ENCODE measurements at regions of chr1 and their contacts with region 1.

Region 1: DNA sequence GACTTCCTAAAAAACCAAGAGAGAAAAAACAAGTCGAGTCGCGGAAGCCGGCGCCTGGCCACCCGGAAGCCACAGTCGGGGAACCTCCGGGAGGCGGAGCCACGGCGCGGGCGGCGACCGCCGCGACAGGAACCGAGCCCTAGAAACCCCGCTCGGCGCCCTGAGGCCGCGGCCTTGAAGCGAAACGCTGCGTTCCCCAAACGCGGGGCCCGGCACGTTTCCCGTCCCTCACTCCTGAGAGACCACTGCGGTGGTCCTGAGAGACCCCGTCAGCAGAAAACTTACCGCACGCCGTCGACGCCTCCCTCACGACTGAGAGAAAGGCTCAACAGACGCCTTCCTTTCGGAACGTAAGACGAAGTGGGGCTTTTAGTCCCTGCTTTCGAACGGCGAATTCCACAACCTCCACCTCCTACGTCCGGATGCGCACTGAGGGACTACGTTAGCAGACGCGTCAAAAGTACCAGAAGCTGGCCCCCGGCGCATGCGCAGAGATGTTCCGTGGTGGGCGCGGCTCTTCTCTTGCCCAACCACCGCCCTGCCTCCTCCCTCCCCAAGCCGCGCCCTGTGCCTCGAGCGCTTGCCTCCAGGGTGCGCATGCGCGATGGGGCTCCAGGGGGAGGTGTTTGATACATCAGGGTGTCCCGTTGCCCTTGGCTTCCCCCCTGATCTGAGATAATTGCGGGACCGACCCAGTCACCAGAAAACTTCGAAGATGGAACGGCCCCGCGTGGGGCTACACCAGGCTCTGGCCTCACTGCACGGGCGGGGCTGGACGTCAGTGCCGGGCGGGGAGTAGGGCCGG is at the start of gene RSRP1:
- DNase-seq: peak; percentile 95
- ATAC-seq: peak; percentile 92
- H3K4me3 ChIP-seq: peak within 1 kb of the TSS; percentile 97
- H3K27ac ChIP-seq: peak within 1 kb of the TSS; percentile 97
- H3K4me1 ChIP-seq: peaks cover 9% of the 10 kb centered on the region
- H3K27me3 ChIP-seq: no peaks in the 10 kb centered on the region
- CTCF ChIP-seq: no peak
- EP300 ChIP-seq: no peak; a peak in 1 of 4 replicates
- POLR2A ChIP-seq: peak; percentile 100
- RAD21 ChIP-seq: no peak
- polyA plus RNA-seq, gene RSRP1: 23.5 to 48.3 TPM

Region 2: DNA sequence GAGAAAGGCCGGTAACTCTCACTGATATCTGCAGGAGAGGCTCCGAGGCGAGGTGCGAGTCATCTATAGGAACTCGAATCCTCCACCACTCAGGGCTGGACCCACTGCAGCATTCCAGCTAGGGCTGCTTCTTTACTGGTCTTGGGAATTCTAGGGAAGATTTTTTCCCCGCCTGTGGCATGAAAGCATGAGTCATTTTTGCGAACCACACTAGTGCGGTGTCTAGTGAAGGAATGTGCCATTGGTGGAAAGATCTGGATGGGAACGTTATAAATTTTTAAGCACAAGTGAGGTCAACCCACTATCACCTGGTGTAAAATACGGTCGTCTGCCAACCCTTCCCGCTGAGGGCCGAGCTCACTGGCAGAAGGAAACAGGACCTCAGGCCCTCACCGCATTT is 64.6 kb before region 1 on chr1:
- CTCF ChIA-PET with region 1: no interaction called
- POLR2A ChIA-PET with region 1: no interaction called
- RAD21 ChIA-PET with region 1: no interaction called
- SMC1A ChIA-PET with region 1: no interaction called
- in situ Hi-C with region 1: no loop called
- intact Hi-C with region 1: no loop called
- DNase-seq: no peak
- ATAC-seq: no peak
- H3K4me3 ChIP-seq: no peak overlapping the region
- H3K27ac ChIP-seq: no peak overlapping the region
- H3K4me1 ChIP-seq: no peaks in the 10 kb centered on the region
- H3K27me3 ChIP-seq: no peaks in the 10 kb centered on the region; a peak in 2 of 4 replicates
- CTCF ChIP-seq: no peak
- EP300 ChIP-seq: no peak
- POLR2A ChIP-seq: no peak
- RAD21 ChIP-seq: no peak

Region 3: GRCh38 chr1:25232027-25232865 is 15.0 kb before region 1 on chr1 and contains the start of gene SYF2:
- CTCF ChIA-PET with region 1: interaction called, 10 read pairs
- POLR2A ChIA-PET with region 1: interaction called, 17 read pairs
- RAD21 ChIA-PET with region 1: interaction called, 6 read pairs
- SMC1A ChIA-PET with region 1: interaction called, 6 read pairs
- in situ Hi-C with region 1: no loop called
- intact Hi-C with region 1: no loop called
- DNase-seq: peak; percentile 81
- ATAC-seq: peak; percentile 88
- H3K4me3 ChIP-seq: peak within 1 kb of the TSS; percentile 88
- H3K27ac ChIP-seq: peak within 1 kb of the TSS; percentile 88
- H3K4me1 ChIP-seq: peaks cover 19% of the 10 kb centered on the region
- H3K27me3 ChIP-seq: no peaks in the 10 kb centered on the region
- CTCF ChIP-seq: no peak
- EP300 ChIP-seq: no peak
- POLR2A ChIP-seq: peak; percentile 95
- RAD21 ChIP-seq: no peak
- polyA plus RNA-seq, gene SYF2: 20.3 to 31.3 TPM

Region 4: GRCh38 chr1:25338188-25338981 is 91.2 kb after region 1 on chr1 and contains the start of gene TMEM50A:
- CTCF ChIA-PET with region 1: no interaction called
- POLR2A ChIA-PET with region 1: interaction called, 3 read pairs
- RAD21 ChIA-PET with region 1: no interaction called
- SMC1A ChIA-PET with region 1: interaction called, 3 read pairs
- in situ Hi-C with region 1: no loop called
- intact Hi-C with region 1: loop called (anchors 5 kb)
- DNase-seq: peak; percentile 54
- ATAC-seq: peak; percentile 84
- H3K4me3 ChIP-seq: peak within 1 kb of the TSS; percentile 73
- H3K27ac ChIP-seq: peak within 1 kb of the TSS; percentile 93
- H3K4me1 ChIP-seq: no peaks in the 10 kb centered on the region
- H3K27me3 ChIP-seq: no peaks in the 10 kb centered on the region
- CTCF ChIP-seq: no peak
- EP300 ChIP-seq: no peak
- POLR2A ChIP-seq: peak; percentile 81
- RAD21 ChIP-seq: no peak
- polyA plus RNA-seq, gene TMEM50A: 23.5 to 41.9 TPM

Measured in GM12878 (cell line).